HCT116 (cell line): ENCODE measurements at regions of chr22 and their contacts with region 1.

Region 1: DNA sequence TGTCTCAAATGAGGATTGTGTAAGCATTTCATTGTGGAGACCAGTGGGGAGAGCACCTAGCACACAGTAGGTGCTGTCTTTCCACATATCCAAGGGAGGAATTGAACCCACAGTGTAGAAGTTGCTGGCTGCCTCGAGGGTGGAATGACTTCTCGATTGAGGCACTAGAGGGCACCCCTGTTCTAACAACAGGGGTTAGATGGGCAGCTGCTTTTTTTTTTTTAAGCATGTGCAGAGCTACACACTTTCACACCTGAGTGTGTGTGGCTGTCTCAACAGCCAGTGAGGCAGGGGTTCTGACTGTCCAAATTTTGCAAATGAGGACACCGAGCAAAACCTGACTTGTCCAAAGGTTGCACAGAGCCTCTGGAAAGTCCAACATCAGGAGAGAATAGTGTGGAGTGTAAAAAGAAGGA is 118.2 kb upstream of the CRYBB3 start:
- DNase-seq: peak; percentile 15
- ATAC-seq: peak; percentile 84
- H3K4me3 ChIP-seq: no peak overlapping the region
- H3K27ac ChIP-seq: no peak overlapping the region
- H3K4me1 ChIP-seq: no peaks in the 10 kb centered on the region
- H3K27me3 ChIP-seq: no peaks in the 10 kb centered on the region
- CTCF ChIP-seq: peak; percentile 53 to 76 (median 69); a peak in 5 of 6 replicates
- POLR2A ChIP-seq: no peak
- RAD21 ChIP-seq: peak; percentile 67

Region 2: GRCh38 chr22:25172153-25172552 is 90.7 kb after region 1 on chr22:
- CTCF ChIA-PET with region 1: interaction called, 14 read pairs
- POLR2A ChIA-PET with region 1: no interaction called
- RAD21 ChIA-PET with region 1: interaction called, 4 to 6 read pairs
- intact Hi-C with region 1: loop called (anchors 1 kb)
- DNase-seq: peak; percentile 8
- ATAC-seq: peak; percentile 74
- H3K4me3 ChIP-seq: no peak overlapping the region
- H3K27ac ChIP-seq: no peak overlapping the region
- H3K4me1 ChIP-seq: peaks cover 26 to 27% of the 10 kb centered on the region in 2 experiments
- H3K27me3 ChIP-seq: no peaks in the 10 kb centered on the region
- CTCF ChIP-seq: peak; percentile 59 to 62 (median 59); a peak in 5 of 6 replicates
- POLR2A ChIP-seq: no peak
- RAD21 ChIP-seq: peak; percentile 73

Region 3: DNA sequence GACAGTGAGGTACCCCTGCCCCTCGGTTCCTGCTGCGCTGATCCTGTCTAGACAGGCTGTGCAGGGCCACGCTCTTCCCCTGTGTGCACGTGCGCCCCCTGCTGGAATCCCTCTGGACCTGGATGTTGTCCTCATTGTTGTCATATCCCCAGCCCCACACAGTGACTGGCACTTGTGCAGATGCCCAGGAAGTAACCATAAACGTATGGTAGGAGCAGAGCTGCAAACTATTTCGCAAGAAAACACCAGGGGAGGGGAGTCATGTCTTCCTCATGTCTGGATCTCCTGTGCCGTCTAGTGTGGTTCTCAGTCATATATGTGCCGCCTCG is 252.7 kb after region 1 on chr22:
- CTCF ChIA-PET with region 1: interaction called, 8 read pairs
- POLR2A ChIA-PET with region 1: no interaction called
- RAD21 ChIA-PET with region 1: no interaction called
- intact Hi-C with region 1: loop called (anchors 2 kb)
- DNase-seq: peak; percentile 36
- ATAC-seq: peak; percentile 96
- H3K4me3 ChIP-seq: no peak overlapping the region
- H3K27ac ChIP-seq: no peak overlapping the region
- H3K4me1 ChIP-seq: no peaks in the 10 kb centered on the region
- H3K27me3 ChIP-seq: no peaks in the 10 kb centered on the region
- CTCF ChIP-seq: peak; percentile 49 to 87 (median 80); a peak in 5 of 6 replicates
- POLR2A ChIP-seq: no peak
- RAD21 ChIP-seq: peak; percentile 63